Activated CD4-positive, alpha-beta memory T cell treated with anti-CD3 and anti-CD28 coated beads for 36 hours (primary cell): ENCODE measurements at regions of chr5 and their contacts with region 1.

Region 1: DNA sequence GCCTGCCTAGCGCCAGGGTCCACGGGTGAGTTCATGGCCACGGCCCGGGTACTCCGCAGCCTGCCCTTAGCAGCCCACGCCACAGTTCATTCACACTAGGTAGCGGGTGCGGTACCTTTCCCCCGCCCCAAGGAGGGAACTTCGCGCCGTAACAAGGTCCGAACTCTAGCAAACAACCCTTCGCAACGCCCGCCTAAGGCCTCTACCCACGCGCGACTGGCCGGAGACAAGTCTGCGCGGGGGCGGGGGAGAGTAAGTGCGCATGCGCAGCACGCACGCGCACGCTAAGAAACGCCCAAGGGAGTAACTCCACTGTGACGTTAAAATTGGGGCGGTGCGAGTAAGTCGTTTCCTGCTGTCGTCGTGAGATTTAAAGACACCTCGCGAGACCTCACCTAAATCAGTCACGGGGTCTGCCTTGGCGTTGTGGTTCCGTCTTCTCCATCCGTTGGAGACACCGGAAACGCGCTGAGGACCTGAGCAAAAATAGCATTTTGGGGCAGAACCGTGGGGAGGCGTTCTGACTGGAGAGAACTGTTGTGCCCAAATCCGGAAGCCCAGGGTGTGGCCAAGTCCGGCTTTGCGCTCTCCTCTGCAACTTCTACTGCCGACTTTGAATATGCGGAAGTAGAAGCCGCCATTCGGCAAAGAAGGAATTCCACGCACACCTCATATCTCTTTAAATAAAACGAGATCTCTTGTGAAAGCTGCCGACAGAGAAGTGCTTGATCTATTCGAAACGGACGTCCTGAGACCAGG is at the start of gene RAPGEF6:
- DNase-seq: peak; percentile 99
- H3K4me3 Mint-ChIP-seq: peak within 1 kb of the TSS; percentile 98
- H3K27ac Mint-ChIP-seq: peak within 1 kb of the TSS; percentile 87
- H3K4me1 Mint-ChIP-seq: peaks cover 25% of the 10 kb centered on the region
- H3K27me3 Mint-ChIP-seq: peaks cover 3% of the 10 kb centered on the region
- total RNA-seq, gene RAPGEF6: 26.7 to 31.3 TPM

Region 2: GRCh38 chr5:131170540-131171275 is 464.5 kb before region 1 on chr5 and contains the start of gene LYRM7:
- CTCF ChIA-PET with region 1: no interaction called
- POLR2A ChIA-PET with region 1: no interaction called
- intact Hi-C with region 1: loop called (anchors 1 kb)
- DNase-seq: peak; percentile 98
- H3K4me3 Mint-ChIP-seq: peak within 1 kb of the TSS; percentile 97
- H3K27ac Mint-ChIP-seq: peak within 1 kb of the TSS; percentile 92
- H3K4me1 Mint-ChIP-seq: peaks cover 37% of the 10 kb centered on the region
- H3K27me3 Mint-ChIP-seq: no peaks in the 10 kb centered on the region
- total RNA-seq, gene LYRM7: 16.6 to 18.6 TPM

Region 3: DNA sequence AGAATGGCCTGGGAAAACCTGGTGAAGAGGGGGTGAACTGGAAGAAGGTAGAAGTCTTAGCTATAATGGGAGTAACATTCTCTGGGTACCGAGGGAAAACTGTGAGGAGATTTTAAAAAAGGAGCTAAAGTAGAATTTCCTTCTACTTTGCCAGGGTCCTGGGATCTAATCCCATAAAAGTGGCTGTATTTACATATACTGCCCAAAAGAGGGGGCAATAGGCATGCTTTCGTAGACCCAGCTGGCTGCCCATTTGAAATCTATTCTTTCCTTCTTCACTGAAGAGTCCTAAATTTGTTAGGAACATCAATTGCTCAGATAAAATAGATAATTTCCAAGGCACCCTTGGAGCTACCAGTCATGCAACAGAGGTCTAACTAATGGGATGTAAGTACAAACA is 212.1 kb before region 1 on chr5:
- CTCF ChIA-PET with region 1: no interaction called
- POLR2A ChIA-PET with region 1: no interaction called
- intact Hi-C with region 1: loop called (anchors 2 kb)
- DNase-seq: no peak
- H3K4me3 Mint-ChIP-seq: no peak overlapping the region
- H3K27ac Mint-ChIP-seq: no peak overlapping the region
- H3K4me1 Mint-ChIP-seq: peaks cover 17% of the 10 kb centered on the region
- H3K27me3 Mint-ChIP-seq: no peaks in the 10 kb centered on the region

Region 4: GRCh38 chr5:131595088-131596033 is 39.8 kb before region 1 on chr5:
- CTCF ChIA-PET with region 1: interaction called, 8 read pairs
- POLR2A ChIA-PET with region 1: no interaction called
- intact Hi-C with region 1: loop called (anchors 1 kb)
- DNase-seq: peak; percentile 33
- H3K4me3 Mint-ChIP-seq: no peak overlapping the region
- H3K27ac Mint-ChIP-seq: peak overlapping the region; percentile 52
- H3K4me1 Mint-ChIP-seq: peaks cover 57% of the 10 kb centered on the region
- H3K27me3 Mint-ChIP-seq: no peaks in the 10 kb centered on the region

Region 5: DNA sequence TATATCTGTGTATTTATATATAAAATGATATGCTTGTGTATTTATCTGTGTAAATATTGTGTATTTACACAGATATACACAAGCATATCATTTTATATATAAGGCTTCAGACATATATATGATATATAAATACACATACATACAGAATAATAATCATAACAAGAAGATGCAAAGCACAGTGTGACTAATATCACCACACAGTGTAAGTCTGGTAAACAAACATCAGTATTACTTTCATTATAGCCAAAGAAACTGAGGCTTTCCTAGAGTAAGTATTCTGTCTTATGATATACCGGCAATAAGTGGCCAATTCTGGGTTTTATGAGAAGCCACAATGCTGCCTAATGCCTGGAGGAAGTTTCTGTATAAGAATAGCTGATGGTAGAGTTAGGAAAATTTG is 29.8 kb after region 1 on chr5:
- CTCF ChIA-PET with region 1: no interaction called
- POLR2A ChIA-PET with region 1: no interaction called
- intact Hi-C with region 1: no loop called
- DNase-seq: no peak
- H3K4me3 Mint-ChIP-seq: no peak overlapping the region
- H3K27ac Mint-ChIP-seq: no peak overlapping the region
- H3K4me1 Mint-ChIP-seq: no peaks in the 10 kb centered on the region
- H3K27me3 Mint-ChIP-seq: no peaks in the 10 kb centered on the region

Region 6: GRCh38 chr5:132019857-132020555 is 384.8 kb after region 1 on chr5:
- CTCF ChIA-PET with region 1: no interaction called
- POLR2A ChIA-PET with region 1: no interaction called
- intact Hi-C with region 1: loop called (anchors 1 kb)
- DNase-seq: peak; percentile 91
- H3K4me3 Mint-ChIP-seq: peak overlapping the region; percentile 11
- H3K27ac Mint-ChIP-seq: peak overlapping the region; percentile 90
- H3K4me1 Mint-ChIP-seq: peaks cover 52% of the 10 kb centered on the region
- H3K27me3 Mint-ChIP-seq: peaks cover 22% of the 10 kb centered on the region

Region 7: DNA sequence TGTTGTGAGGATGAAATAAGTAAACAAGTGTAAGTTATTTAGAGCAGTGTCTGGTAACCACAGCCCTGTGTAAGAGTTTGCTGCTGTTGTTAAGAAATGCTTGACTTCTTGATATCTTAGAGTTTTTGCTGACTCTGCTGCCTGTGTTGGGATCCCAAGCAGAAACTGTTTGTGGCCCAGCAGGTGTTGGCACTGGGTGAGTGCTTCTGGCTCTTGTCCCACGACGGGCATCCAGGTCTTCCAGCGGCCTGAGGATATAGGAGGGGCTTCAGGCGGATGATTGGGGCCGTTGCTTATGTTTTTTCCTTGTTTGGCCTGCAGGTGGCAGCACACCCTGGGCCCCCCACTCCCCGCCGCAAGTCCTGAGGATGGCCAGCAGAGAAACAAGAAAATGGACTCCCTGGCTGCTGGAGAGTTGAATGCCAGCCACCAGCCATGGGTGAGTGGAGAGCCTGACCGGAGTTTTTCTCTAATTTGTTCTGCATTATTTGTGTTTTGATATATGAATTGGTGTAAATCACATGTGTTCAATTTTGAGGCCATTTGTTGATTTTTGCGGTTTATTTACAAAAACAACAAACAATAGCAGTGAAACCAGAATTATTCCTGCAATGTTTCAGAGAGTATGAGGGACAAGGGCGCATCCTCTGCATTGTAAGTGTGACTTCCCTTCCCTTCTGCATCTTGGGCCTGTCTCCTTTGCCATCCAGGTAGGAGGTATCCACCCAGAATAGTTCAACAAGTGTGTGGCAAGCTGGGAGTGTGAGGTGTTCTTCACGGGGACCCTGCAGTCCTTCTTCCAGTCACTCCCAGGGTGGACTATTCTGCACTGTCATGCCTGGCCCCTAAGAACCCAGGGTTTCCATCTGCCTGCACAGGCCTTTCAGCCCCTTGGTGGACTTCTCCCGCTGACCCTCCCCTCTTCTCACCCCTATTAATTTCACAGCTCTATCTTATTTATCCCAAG is 784.6 kb after region 1 on chr5:
- CTCF ChIA-PET with region 1: no interaction called
- POLR2A ChIA-PET with region 1: no interaction called
- intact Hi-C with region 1: loop called (anchors 10 kb)
- DNase-seq: peak; percentile 78
- H3K4me3 Mint-ChIP-seq: peak overlapping the region; percentile 15
- H3K27ac Mint-ChIP-seq: peak overlapping the region; percentile 83
- H3K4me1 Mint-ChIP-seq: peaks cover 89% of the 10 kb centered on the region
- H3K27me3 Mint-ChIP-seq: no peaks in the 10 kb centered on the region